A549 (cell line): ENCODE measurements at regions of chr10 and their contacts with region 1.

Region 1: GRCh38 chr10:118827466-118828155 is 72.8 kb upstream of the CACUL1 start:
- DNase-seq: no peak
- ATAC-seq: no peak
- H3K4me3 ChIP-seq: no peak overlapping the region
- H3K27ac ChIP-seq: no peak overlapping the region
- H3K4me1 ChIP-seq: no peaks in the 10 kb centered on the region
- CTCF ChIP-seq: 0 out of 3 replicates have a peak, but pooled peaks have one; percentile 16
- EP300 ChIP-seq: no peak
- POLR2A ChIP-seq: no peak
- RAD21 ChIP-seq: no peak

Region 2: DNA sequence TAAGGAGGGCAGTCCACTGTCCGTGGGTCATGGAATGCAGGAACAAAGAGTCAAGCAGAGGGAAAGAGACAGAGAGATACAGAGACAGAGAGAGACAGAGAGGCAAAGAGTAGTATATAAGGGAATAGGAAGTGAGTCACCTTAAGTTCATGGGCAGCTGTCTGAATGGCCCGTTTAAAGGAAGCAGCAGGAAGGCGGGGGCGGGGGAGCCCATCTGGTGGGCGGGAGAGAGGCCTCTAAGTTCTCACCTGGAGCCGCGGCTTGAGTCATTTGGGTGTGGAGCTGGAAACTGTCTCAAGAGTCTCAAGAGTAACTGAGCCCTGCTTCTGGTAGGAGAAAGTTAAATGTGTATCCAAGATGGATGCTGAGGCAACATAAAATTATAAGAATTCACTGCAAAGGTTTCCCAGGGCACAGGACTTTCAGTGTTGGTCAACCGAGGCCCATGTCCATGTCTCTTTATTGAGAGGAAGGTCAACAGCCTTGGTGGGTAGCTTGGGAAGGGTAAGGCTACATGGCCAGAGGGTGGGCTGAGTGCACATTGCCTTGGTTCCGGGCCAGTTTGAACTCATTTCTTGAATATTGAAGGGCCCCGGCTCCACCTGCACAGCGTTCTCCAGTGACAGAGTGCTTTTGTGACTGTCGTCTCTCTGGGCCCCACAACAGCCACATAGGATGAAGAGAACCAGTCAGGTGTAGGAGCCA is 12.6 kb after region 1 on chr10:
- CTCF ChIA-PET with region 1: interaction called, 15 read pairs
- POLR2A ChIA-PET with region 1: no interaction called
- DNase-seq: no peak
- ATAC-seq: no peak
- H3K4me3 ChIP-seq: no peak overlapping the region
- H3K27ac ChIP-seq: no peak overlapping the region
- H3K4me1 ChIP-seq: peaks cover 15% of the 10 kb centered on the region
- CTCF ChIP-seq: no peak
- EP300 ChIP-seq: no peak
- POLR2A ChIP-seq: no peak
- RAD21 ChIP-seq: no peak

Region 3: GRCh38 chr10:118922226-118922625 is 94.6 kb after region 1 on chr10:
- CTCF ChIA-PET with region 1: no interaction called
- POLR2A ChIA-PET with region 1: no interaction called
- DNase-seq: no peak
- ATAC-seq: no peak
- H3K4me3 ChIP-seq: no peak overlapping the region
- H3K27ac ChIP-seq: no peak overlapping the region
- H3K4me1 ChIP-seq: no peaks in the 10 kb centered on the region
- CTCF ChIP-seq: no peak
- EP300 ChIP-seq: no peak
- POLR2A ChIP-seq: no peak
- RAD21 ChIP-seq: no peak